Ascending aorta (tissue), 2 donors: ENCODE measurements at regions of chr11 and their contacts with region 1.

Region 1: DNA sequence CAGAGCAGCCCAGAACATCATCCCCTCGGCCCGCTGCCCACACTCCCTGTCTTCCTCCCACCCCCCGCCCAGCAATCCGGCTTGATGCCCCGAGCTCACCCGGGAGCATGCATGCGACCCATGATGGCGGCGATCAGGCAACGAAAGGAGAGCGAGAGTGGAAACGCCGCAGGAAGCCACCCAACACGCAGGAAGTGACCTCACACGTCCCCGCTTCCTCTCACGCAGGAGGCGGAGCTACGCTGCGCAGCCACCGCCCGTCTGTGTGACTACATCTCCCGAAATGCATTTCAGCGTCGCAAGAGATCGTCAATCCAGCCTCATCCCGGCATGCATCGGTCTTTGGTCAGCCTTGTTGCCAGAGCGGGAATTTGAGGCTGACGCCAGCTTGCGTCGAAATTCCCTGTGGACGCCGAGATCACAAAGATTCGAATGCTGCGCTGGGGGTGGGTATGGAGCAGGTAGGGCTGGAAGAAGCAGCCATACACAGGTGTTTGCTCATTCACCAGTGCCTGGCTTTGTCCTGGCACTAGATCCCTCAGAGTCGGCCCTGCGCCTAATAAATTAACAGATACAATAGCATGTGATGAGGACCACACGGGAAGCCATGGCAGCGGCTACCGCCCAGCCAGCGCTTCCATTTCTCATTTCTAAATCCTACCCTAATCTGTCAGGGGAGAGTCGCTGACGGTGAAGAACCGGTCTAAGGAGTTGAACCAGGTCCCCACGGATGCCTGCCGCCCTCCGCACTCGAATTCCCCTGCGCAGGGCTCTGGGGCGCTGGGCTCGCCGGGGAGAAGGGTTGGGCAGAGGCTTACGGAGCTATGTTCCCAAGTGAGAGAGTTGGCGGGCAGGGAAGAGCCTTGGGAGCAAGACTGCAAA is at the start of gene RPS13:
- DNase-seq: peak; percentile 90 to 98
- H3K4me3 ChIP-seq: peak within 1 kb of the TSS; percentile 87 to 97
- H3K27ac ChIP-seq: peak within 1 kb of the TSS; percentile 92 to 93
- H3K4me1 ChIP-seq: peaks cover 8 to 23% of the 10 kb centered on the region in 2 donors
- H3K27me3 ChIP-seq: no peaks in the 10 kb centered on the region
- CTCF ChIP-seq: no peak
- total RNA-seq, gene RPS13: 987 TPM

Region 2: GRCh38 chr11:16738193-16738946 is 339.4 kb before region 1 on chr11 and contains the start of gene C11orf58:
- intact Hi-C with region 1: loop called (anchors 2 kb)
- DNase-seq: peak; percentile 94 to 98
- H3K4me3 ChIP-seq: peak within 1 kb of the TSS; percentile 93
- H3K27ac ChIP-seq: peak within 1 kb of the TSS; percentile 95
- H3K4me1 ChIP-seq: peaks cover 4 to 16% of the 10 kb centered on the region in 2 donors
- H3K27me3 ChIP-seq: no peaks in the 10 kb centered on the region
- CTCF ChIP-seq: no peak
- total RNA-seq, gene C11orf58: 40.9 TPM

Region 3: DNA sequence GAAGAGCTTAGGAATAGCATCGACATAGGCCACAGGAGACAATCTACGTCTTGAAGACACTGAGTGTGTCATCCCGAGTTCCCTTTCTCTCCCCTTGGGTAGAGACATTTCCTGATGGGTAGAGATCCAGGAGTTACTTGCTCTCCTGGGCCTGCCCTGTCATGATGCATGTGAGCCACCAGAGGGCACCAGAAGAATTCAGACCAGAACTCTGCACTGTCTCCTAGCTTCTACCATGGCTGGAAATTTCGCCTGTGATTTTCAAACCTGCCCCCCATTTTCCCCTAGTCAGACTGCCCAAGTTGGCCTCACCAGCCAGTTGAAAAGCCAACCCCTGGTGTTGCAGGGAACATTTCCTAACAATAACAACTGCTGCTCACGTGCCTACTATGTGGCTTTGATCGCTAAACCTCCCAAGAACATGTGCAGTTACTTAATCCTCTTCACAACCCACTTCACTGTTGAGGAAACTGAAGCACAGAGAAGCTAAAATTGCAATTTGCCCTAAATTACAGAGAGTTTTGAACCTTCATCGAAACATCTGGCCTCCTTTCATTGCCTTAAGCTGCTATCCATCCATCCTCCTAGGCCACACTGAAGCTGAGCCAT is 292.1 kb before region 1 on chr11:
- intact Hi-C with region 1: loop called (anchors 5 kb)
- DNase-seq: peak in 1 of 2 donors; percentile 85
- H3K4me3 ChIP-seq: no peak overlapping the region
- H3K27ac ChIP-seq: no peak overlapping the region
- H3K4me1 ChIP-seq: peaks cover 5 to 10% of the 10 kb centered on the region in 2 donors
- H3K27me3 ChIP-seq: no peaks in the 10 kb centered on the region
- CTCF ChIP-seq: peak; percentile 77 to 86 (median 81)

Region 4: DNA sequence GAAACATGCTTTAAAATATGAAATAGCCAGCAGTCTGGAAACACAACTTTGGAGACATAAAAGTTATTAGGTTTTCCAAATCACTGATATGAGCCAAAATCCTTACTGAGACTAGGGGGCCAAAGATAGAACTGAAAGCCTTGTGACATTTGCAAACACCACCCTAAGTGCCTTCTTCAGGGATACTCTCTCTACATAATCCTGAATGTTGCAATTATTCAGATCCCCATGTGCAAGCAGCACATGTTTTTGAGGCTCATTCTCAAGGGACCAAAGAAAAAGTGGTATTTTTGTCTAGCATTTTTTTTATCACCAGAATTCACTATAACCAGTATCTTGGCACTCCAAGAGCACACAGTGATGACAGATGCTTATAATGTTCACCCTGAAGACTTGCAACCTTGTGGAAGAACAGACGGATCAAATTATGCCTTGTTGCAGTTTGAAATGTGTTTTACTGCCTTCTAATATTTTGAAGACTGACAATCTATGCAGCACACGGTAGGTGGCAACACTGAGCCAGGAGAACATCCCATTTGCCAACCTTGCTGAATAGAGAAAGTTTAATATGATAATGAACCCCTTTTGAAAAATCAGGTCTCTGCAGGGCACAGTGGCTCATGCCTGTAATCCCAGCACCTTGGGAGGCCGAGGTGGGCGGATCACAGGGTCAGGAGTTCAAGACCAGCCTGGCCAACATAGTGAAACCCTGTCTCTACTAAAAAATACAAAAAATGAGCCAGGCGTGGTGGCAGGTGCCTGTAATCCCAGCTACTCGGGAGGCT is 142.1 kb before region 1 on chr11:
- intact Hi-C with region 1: loop called (anchors 10 kb)
- DNase-seq: no peak
- H3K4me3 ChIP-seq: no peak overlapping the region
- H3K27ac ChIP-seq: no peak overlapping the region
- H3K4me1 ChIP-seq: peaks cover 0 to 4% of the 10 kb centered on the region in 2 donors
- H3K27me3 ChIP-seq: no peaks in the 10 kb centered on the region
- CTCF ChIP-seq: peak in 2 of 3 experiments; percentile 46 to 72

Region 5: DNA sequence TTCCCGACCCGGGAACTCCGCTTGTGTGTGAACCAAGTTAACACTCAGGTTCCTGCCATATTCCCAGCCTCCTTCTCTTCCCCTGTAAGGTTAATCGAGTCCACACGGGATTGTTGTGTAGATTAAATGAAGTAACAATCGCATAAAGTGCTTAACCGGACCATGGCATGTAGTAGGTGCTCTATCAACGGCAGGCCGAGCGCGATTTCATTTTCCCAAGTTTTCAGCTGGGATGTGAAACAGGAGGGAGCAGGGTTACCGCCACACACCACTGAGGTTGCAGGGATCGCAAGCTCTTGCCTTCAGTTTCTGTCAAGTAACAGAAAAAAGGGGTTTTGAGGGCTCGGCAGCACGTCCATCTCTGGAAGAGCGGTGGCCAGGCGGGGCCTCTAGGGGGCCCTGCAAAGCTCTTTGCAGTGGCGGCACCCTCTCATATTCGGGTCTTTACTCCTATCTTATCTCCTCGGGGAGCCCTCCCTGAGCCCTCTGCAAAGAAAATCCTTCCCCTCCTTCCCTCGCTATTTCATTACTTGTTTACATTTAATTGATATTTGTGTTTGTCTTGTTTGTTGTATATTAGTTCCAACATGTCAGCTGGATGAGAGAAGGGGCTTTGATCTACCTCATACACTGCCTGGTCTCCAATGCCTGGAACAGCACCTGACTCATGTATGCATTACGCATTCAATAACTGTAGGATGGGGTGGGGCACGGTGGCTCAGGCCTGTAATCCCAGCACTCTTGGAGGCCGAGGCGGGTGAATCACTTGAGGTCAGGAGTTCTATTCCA is 62.7 kb before region 1 on chr11:
- intact Hi-C with region 1: loop called (anchors 2 kb)
- DNase-seq: no peak
- H3K4me3 ChIP-seq: peak overlapping the region; percentile 70 to 98
- H3K27ac ChIP-seq: no peak overlapping the region
- H3K4me1 ChIP-seq: peaks cover 0 to 3% of the 10 kb centered on the region in 2 donors
- H3K27me3 ChIP-seq: no peaks in the 10 kb centered on the region
- CTCF ChIP-seq: peak in 2 of 3 experiments; percentile 16 to 30

Region 6: DNA sequence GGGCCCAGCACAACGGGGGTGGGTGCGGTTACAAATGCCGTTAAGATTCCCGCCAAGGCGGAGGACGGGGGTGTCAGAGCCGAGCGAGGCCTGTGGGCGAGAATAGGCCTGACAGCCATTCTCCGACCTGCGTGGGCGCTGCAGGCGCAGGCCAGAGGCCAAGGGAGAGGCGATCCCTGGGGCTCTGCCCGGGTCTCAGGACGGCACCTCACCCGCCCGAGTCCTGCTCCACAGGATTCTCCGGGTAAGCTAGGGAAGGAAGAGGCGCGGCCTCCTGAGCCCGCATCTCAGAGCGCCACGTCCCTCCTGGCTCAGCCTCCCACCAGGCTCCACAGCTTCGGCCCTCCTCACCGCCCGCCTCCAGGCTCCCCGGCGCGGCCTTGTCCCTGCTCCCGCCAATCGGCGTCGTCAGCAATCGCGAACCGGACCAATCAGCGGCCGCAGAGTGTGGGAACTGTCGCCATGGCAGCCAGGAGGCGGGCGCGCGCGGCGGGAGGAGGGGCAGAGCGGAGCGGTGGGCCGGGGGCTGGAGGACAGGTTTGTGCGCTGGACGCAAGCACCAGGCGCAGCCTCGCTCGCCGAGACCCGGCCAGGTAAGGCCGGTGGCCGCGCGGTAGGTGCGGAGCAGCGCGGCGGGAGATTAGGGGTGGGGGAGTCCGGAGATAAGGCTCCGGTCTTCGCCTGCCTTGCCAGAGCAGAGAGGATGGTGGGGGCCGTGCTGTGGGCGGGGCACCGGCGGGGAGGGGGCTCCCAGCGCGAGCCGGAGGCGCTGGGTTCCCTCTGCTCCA is 198.7 kb after region 1 on chr11 and contains the start of gene NUCB2:
- intact Hi-C with region 1: loop called (anchors 1 kb)
- DNase-seq: peak; percentile 88 to 97
- H3K4me3 ChIP-seq: peak within 1 kb of the TSS; percentile 78 to 85
- H3K27ac ChIP-seq: peak within 1 kb of the TSS; percentile 86 to 92
- H3K4me1 ChIP-seq: peaks cover 0 to 5% of the 10 kb centered on the region in 2 donors
- H3K27me3 ChIP-seq: no peaks in the 10 kb centered on the region
- CTCF ChIP-seq: no peak
- total RNA-seq, gene NUCB2: 47.8 TPM

Region 7: GRCh38 chr11:17354601-17354991 is 276.8 kb after region 1 on chr11:
- intact Hi-C with region 1: loop called (anchors 5 kb)
- DNase-seq: peak in 1 of 2 donors; percentile 86
- H3K4me3 ChIP-seq: peak overlapping the region in 1 of 2 donors; percentile 98
- H3K27ac ChIP-seq: no peak overlapping the region
- H3K4me1 ChIP-seq: peaks cover 0 to 7% of the 10 kb centered on the region in 2 donors
- H3K27me3 ChIP-seq: no peaks in the 10 kb centered on the region
- CTCF ChIP-seq: peak; percentile 39 to 57 (median 53)